Ovary (tissue), 10 donors: ENCODE measurements at regions of chr6 and their contacts with region 1.

Region 1: DNA sequence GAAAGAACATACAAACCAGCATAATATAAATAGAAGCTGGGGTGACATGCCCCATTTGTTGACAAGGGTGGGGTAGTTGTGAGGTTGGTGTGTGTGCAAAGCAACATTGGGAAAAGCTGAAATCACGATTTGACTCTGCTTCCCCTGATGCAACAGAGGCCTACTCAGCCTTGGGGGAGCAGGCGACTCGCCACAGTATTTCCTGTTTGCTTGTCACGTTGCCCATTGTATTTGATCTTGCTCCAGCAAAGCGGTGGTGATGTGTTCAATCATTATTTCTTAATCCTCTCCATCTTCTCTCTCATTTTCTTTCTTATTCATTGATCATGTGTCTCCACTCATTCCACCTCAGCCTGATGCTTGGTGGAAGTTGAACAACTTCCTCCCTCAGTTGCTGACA is 165.8 kb upstream of the CITED2 start:
- DNase-seq: no peak
- H3K4me3 ChIP-seq: no peak overlapping the region
- H3K27ac ChIP-seq: no peak overlapping the region
- H3K4me1 ChIP-seq: no peaks in the 10 kb centered on the region
- H3K27me3 ChIP-seq: no peaks in the 10 kb centered on the region
- CTCF ChIP-seq: no peak
- EP300 ChIP-seq: no peak
- POLR2A ChIP-seq: no peak

Region 2: DNA sequence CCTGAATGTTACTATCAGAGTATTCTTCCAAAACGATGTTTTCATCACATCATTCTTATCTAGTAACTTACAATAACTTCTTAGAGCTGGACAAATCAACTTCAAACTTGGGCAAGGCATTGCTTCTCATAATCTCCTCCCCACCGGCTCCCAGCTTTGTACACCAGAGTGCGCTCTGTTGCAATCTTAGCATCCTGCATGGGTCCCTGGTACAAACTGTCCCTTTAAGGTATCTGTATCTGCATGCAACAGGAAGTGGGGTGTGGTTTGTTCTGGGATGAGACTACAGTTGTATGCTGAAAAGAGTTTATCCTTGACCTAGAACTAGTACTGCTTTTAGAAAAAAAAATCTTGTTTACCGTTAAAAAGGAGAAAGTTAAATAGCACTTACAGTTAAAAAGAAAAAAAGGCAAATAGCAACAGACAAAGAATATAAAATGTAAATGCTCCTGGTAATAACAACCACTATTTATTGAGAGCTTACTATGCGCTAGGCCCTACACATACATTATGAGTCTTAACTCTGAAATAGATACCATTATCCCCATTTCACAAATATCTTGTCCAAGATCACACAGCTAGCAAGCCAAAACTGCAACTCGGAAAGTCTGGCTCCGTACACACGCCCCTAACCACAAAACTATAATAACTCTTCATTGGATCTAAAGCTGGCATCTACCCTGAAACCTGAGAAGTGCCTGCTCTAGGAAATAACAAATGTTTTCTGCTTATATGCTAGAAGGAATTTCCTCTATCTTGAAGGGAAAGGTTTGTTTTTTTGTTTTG is 415.2 kb before region 1 on chr6:
- intact Hi-C with region 1: no loop called
- DNase-seq: peak; percentile 32 to 65 (median 48)
- H3K4me3 ChIP-seq: no peak overlapping the region
- H3K27ac ChIP-seq: no peak overlapping the region
- H3K4me1 ChIP-seq: peaks cover 3% of the 10 kb centered on the region
- H3K27me3 ChIP-seq: no peaks in the 10 kb centered on the region
- CTCF ChIP-seq: peak in 1 of 3 donors; percentile 43
- EP300 ChIP-seq: no peak
- POLR2A ChIP-seq: no peak

Region 3: DNA sequence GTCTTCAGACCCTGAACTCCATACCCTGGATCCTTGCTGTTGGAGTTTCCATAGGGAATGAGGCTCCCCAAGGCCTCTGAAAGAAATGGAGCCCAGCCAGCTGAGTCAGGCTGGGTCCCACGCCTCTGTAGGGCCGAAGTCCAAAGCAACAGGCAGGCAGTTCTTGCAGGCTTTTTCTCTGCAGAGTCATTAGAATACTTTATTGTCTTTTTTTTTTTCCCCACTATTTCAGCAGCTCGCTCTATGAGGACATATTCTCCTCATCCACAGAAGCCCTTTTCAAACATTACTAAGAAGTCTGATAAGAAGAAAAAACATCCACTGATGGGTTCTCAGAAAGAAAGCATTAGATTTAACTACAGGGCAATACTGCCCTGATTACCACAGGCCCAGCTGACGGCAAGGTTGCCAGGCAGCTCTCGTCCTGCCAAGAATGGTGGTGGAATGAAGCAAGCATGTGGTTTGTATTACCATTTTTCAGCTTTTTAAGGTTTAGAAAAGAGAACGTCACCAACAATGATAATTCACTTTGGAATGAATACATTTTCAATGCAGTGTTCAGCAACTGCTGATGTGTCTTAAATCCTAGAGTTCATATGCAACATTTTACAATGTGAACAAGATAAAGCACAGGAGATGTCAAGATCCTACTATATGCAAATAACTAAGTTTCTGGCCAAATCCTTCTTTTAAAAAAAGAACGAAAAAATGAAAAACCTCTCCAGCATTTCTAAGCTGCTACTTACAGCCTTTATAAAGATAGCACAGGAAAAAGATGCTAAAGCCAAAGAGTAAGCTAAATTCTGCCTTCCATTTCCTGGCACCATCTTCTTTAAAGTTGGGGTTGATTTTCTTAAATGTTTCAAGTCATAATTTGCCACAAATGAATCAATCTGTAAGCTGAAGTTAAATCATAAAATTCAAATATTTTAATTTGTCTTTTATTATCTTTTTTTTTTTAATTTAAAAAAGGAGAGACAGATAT is 57.8 kb after region 1 on chr6:
- intact Hi-C with region 1: loop called in 1 of 4 experiments (anchors 10 kb)
- DNase-seq: peak; percentile 81 to 87 (median 86)
- H3K4me3 ChIP-seq: no peak overlapping the region
- H3K27ac ChIP-seq: peak overlapping the region in 1 of 2 donors; percentile 56
- H3K4me1 ChIP-seq: peaks cover 1% of the 10 kb centered on the region
- H3K27me3 ChIP-seq: no peaks in the 10 kb centered on the region
- CTCF ChIP-seq: no peak
- EP300 ChIP-seq: no peak
- POLR2A ChIP-seq: no peak